A549 (cell line): ENCODE measurements at regions of chr1 and their contacts with region 1.

Region 1: DNA sequence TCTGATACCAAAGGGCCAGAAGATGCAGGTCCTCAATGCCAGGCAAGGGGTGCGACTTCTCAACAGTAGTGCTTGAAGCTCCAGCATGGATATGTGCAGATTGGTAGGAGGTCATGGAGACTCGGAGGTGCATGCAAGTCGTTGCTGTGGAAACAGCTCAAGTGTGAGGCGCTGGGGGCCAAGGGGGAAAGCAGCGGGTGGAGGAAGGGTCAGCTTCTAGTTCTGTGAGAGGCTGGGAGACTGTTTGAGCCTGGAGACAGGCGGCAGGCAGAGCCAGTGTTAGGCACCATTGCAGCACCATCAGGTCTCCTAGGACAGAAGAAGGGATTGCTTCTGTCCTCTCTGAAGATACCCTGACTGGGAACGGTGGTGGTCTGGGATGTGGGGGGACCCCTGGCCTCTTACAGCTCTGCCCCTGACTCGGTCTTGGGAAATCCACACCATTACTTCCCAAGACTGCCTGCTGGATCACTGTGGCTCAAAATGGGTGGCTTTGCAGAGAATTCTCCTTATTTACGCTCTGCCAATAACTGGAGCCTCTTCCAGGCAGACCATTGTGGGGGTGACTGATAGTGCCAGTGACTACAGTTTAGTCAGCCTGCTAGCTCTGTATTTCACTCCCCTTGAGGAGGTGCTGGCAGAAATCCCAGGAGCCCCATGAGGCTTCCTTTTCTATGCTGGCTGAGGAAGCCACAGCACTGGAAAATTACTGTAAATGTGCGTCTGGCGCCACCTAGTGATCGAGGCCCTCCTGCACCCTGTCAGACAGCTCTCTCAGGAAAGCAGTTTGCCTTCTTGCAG is 46.3 kb upstream of the VANGL1 start:
- DNase-seq: peak; percentile 43 to 71
- ATAC-seq: peak; percentile 92 to 98
- H3K4me3 ChIP-seq: no peak overlapping the region
- H3K27ac ChIP-seq: peak overlapping the region in 1 of 2 experiments; percentile 67; a peak in 3 of 6 replicates
- H3K4me1 ChIP-seq: no peaks in the 10 kb centered on the region
- CTCF ChIP-seq: peak; percentile 79
- EP300 ChIP-seq: no peak
- POLR2A ChIP-seq: no peak
- RAD21 ChIP-seq: peak; percentile 90 to 95

Region 2: DNA sequence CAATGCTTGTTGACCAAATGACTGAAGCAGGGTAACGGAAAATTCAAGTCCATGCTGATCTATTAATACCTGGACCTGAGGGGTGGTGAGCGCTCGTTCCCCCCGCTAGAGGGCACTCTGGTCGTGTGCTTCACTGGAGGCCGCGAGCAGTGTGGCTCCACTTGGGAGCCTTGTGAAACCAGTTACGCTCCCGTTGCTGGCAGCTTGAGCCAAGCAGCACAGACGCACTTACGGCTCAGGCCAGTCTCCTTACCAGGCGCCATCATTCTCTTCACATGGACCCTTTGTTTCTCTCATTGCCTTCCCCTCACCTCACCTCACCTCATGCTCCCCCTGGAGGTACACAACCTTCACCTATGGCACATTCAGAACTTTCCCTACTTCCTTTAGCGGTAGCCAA is 456.5 kb before region 1 on chr1:
- CTCF ChIA-PET with region 1: interaction called, 98 read pairs
- POLR2A ChIA-PET with region 1: no interaction called
- DNase-seq: peak; percentile 63 to 90
- ATAC-seq: peak; percentile 84 to 95
- H3K4me3 ChIP-seq: no peak overlapping the region
- H3K27ac ChIP-seq: peak overlapping the region; percentile 62 to 88
- H3K4me1 ChIP-seq: peaks cover 34% of the 10 kb centered on the region
- CTCF ChIP-seq: peak; percentile 80
- EP300 ChIP-seq: no peak
- POLR2A ChIP-seq: no peak
- RAD21 ChIP-seq: peak; percentile 96 to 98

Region 3: DNA sequence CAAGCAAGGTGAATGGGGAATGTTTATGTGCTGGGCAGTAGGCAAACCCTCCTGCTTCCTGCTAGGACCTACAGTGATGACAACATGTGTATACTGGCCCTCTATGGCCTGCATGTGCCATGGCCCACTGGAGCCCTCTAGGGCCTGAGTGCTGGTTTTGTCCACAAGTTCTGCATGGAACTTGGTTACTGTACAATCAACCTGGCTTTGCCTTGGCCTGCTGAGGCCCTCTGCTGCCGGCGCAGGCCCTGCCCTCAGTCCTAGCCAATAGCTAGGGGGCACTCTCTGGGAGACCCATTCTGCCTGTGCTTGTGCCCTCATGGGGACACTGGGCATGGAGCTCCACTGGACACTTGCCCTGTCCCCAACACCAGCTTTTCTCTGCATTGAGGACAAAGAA is 118.9 kb before region 1 on chr1:
- CTCF ChIA-PET with region 1: interaction called, 12 read pairs
- POLR2A ChIA-PET with region 1: no interaction called
- DNase-seq: peak in 1 of 2 experiments; percentile 25
- ATAC-seq: peak in 1 of 2 experiments; percentile 71; a peak in 3 of 6 replicates
- H3K4me3 ChIP-seq: no peak overlapping the region
- H3K27ac ChIP-seq: no peak overlapping the region
- H3K4me1 ChIP-seq: no peaks in the 10 kb centered on the region
- CTCF ChIP-seq: peak; percentile 12; the same call in 1 of the 3 replicates
- EP300 ChIP-seq: no peak
- POLR2A ChIP-seq: no peak
- RAD21 ChIP-seq: no peak; a peak in 1 of 5 replicates

Region 4: DNA sequence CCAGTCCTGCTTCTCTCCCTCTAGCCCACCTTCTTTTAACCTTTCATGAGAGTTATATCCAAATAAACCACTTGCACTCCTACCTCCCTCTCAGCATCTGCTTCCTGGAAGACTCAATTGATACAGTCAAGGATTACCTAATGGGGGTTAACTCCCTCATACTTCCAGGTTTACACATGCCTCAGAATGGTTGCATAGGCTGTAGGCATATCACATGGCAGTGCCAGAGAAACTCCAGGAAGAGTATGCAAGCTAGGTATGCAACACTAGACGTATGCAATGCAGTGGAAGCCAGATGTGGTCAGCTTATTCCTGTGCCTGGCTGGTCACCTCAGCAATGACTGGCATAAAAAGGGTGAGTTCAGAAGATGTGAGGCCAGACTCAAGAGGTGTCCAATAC is 13.5 kb after region 1 on chr1:
- CTCF ChIA-PET with region 1: interaction called, 24 read pairs
- POLR2A ChIA-PET with region 1: no interaction called
- DNase-seq: no peak
- ATAC-seq: no peak
- H3K4me3 ChIP-seq: no peak overlapping the region
- H3K27ac ChIP-seq: no peak overlapping the region
- H3K4me1 ChIP-seq: no peaks in the 10 kb centered on the region
- CTCF ChIP-seq: no peak
- EP300 ChIP-seq: no peak
- POLR2A ChIP-seq: no peak
- RAD21 ChIP-seq: no peak